IMR-90 (cell line): ENCODE measurements at regions of chr3 and their contacts with region 1.

Region 1: GRCh38 chr3:32177702-32178198 is 60.7 kb upstream of the CMTM8 start:
- DNase-seq: peak; percentile 47
- ATAC-seq: peak; percentile 81
- H3K4me3 ChIP-seq: no peak overlapping the region
- H3K27ac ChIP-seq: no peak overlapping the region
- H3K4me1 ChIP-seq: no peaks in the 10 kb centered on the region
- H3K27me3 ChIP-seq: peaks cover 18% of the 10 kb centered on the region
- CTCF ChIP-seq: peak; percentile 47
- POLR2A ChIP-seq: no peak
- RAD21 ChIP-seq: peak; percentile 33; the same call in 1 of the 2 replicates

Region 2: GRCh38 chr3:32340039-32340438 is 162.3 kb after region 1 on chr3:
- CTCF ChIA-PET with region 1: no interaction called
- POLR2A ChIA-PET with region 1: no interaction called
- dilution Hi-C with region 1: no loop called
- in situ Hi-C with region 1: no loop called
- intact Hi-C with region 1: loop called (anchors 2 kb)
- DNase-seq: peak; percentile 35
- ATAC-seq: peak; percentile 62
- H3K4me3 ChIP-seq: no peak overlapping the region
- H3K27ac ChIP-seq: no peak overlapping the region
- H3K4me1 ChIP-seq: no peaks in the 10 kb centered on the region
- H3K27me3 ChIP-seq: peaks cover 13% of the 10 kb centered on the region
- CTCF ChIP-seq: peak; percentile 40
- POLR2A ChIP-seq: no peak
- RAD21 ChIP-seq: peak; percentile 57

Region 3: GRCh38 chr3:32467333-32468070 is 289.8 kb after region 1 on chr3:
- CTCF ChIA-PET with region 1: no interaction called
- POLR2A ChIA-PET with region 1: no interaction called
- dilution Hi-C with region 1: no loop called
- in situ Hi-C with region 1: no loop called
- intact Hi-C with region 1: loop called (anchors 10 kb)
- DNase-seq: peak; percentile 52
- ATAC-seq: peak; percentile 76
- H3K4me3 ChIP-seq: no peak overlapping the region
- H3K27ac ChIP-seq: no peak overlapping the region
- H3K4me1 ChIP-seq: peaks cover 11% of the 10 kb centered on the region
- H3K27me3 ChIP-seq: no peaks in the 10 kb centered on the region
- CTCF ChIP-seq: peak; percentile 92
- POLR2A ChIP-seq: no peak
- RAD21 ChIP-seq: peak; percentile 92